GM18951 (cell line): ENCODE measurements at regions of chr2 and their contacts with region 1.

Region 1: DNA sequence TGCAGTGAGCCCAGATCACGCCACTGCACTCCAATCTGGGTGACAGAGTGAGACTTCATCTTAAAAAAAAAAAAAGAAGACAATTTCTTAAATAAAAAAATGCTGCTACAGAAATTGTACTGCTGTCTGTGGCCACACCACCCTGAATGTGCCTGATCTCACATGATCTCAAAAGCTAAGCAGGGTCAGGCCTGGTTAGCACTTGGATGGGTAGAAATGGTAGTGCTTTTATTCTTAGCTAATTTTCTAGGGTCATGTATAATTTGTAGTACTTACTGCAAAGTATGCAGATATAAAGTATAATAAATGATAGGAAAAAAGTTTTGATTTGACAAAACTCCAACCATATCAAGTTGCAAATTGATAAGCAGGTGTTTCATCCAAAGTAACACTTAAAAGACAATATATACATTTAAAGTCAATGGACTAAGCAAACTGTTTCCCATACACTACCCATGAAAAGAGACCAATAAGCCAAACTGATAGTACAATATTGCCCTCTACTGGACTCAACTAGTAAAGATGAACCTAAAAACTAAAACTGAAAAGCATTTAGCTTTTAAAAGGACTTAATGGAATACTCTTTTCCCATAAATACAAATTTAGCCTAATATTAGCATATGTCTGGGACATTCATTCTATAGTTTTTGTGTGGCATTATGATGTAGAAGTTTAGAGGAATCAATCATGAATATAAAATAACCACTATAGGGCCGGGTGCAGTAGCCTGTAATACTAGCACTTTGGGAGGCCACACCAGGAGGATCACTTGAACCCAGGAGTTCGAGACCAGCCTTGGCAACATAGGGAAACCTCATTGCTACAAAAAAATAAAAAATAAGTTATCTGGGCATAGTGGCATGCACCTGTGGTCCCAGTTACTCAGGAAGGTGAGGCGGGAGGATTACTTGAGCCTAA is 18.6 kb upstream of the PEX13 start:
- POLR2A ChIP-seq: no peak

Region 2: DNA sequence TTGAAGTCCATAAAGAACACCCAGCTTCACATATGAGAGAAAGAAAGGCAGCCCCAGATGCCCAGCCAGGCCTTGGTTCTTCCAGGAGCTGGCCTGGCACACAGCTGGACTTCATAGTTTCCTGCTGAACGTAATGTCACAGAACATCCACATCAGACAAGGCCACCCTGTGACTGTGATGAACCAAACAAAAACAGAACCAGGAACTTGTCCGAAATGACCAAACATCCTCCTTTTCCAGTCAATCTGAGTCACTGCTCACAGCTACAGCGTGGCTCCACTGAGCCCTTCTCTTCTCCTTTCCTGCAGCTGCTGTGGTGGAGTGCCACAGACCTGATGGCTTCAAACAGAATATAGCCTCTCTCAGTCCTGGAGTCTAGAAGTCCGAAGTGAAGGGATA is 288.2 kb before region 1 on chr2:
- in situ Hi-C with region 1: loop called (anchors 10 kb)
- POLR2A ChIP-seq: no peak

Region 3: DNA sequence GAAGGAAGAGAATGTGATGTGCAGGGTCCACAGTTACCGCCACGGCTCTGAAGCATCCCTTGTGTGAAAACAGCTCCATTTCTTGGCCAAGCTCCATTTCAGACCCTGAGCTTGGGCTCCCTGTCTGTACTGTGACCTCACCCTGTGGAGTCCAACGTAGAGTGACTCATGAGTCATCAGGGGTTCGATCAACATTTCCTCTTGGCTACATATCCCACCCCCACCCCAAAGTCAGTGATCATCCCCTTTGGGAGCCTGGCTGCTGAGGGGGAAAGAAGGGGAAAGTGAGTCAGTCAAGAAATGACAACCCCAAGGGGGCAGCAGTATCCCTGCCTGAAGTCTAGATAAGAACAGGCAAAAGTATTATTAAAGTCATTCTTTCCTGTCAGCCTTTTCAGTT is 180.6 kb before region 1 on chr2:
- in situ Hi-C with region 1: loop called (anchors 10 kb)
- POLR2A ChIP-seq: no peak